GM23248 (cell line): ENCODE measurements at regions of chr20 and their contacts with region 1.

Region 1: GRCh38 chr20:5863040-5863833 is 87.1 kb downstream of the TRMT6 start:
- DNase-seq: peak; percentile 61
- H3K4me3 ChIP-seq: peak overlapping the region; percentile 1; the same call in 1 of the 2 replicates
- H3K27ac ChIP-seq: no peak overlapping the region
- H3K4me1 ChIP-seq: peaks cover 16% of the 10 kb centered on the region
- H3K27me3 ChIP-seq: no peaks in the 10 kb centered on the region

Region 2: GRCh38 chr20:5806457-5807263 is 56.6 kb before region 1 on chr20:
- in situ Hi-C with region 1: loop called (anchors 10 kb)
- DNase-seq: no peak
- H3K4me3 ChIP-seq: no peak overlapping the region
- H3K27ac ChIP-seq: no peak overlapping the region
- H3K4me1 ChIP-seq: no peaks in the 10 kb centered on the region
- H3K27me3 ChIP-seq: no peaks in the 10 kb centered on the region